HAP-1 (cell line): ENCODE measurements at regions of chr16 and their contacts with region 1.

Region 1: DNA sequence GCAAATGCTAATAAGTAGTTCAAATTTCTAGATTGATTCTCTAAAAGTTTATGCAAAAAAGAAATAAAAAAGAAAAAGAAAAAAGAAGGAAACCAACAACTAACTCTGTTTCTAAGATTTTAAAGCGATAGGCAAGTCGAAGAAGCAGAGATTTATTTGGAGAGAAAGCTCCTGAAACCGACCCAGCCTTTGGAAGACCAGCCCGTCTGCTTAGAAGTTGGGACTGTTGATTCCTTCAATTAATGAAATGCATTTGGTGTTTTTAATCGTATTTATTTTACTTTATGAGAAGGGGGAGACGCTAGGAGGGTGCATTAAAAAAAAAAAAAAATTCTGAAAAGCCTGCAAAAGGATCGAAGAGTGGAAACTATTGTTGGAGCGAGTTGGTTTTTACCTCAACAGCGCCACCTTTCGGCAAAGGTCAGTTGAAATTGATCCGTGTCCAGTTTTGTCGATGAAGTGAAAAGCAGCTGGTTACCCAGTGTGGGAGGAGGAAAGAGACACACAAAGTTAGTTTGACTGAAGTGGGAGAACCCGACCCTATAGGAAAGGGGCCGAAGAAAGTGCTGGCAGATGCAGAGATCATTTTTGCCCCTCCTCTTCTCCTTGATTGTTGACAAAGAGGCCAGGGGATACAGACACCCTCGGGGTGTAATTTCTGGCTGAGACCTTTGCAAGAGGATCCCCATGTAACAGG is 1.5 kb upstream of the MAF start:
- DNase-seq: peak; percentile 76 to 91
- H3K4me3 ChIP-seq: peak overlapping the region; percentile 55
- H3K4me1 ChIP-seq: peaks cover 27% of the 10 kb centered on the region
- H3K27me3 ChIP-seq: no peaks in the 10 kb centered on the region

Region 2: GRCh38 chr16:78099372-78100161 is 1502.5 kb before region 1 on chr16 and contains the start of gene WWOX:
- in situ Hi-C with region 1: loop called (anchors 25 kb)
- DNase-seq: peak; percentile 88 to 95
- H3K4me3 ChIP-seq: peak within 1 kb of the TSS; percentile 76
- H3K4me1 ChIP-seq: peaks cover 9% of the 10 kb centered on the region
- H3K27me3 ChIP-seq: no peaks in the 10 kb centered on the region

Region 3: GRCh38 chr16:80084685-80085084 is 482.6 kb after region 1 on chr16:
- in situ Hi-C with region 1: loop called (anchors 25 kb)
- DNase-seq: peak; percentile 68
- H3K4me3 ChIP-seq: no peak overlapping the region
- H3K4me1 ChIP-seq: no peaks in the 10 kb centered on the region
- H3K27me3 ChIP-seq: no peaks in the 10 kb centered on the region